H1 (cell line): ENCODE measurements at regions of chr16 and their contacts with region 1.

Region 1: DNA sequence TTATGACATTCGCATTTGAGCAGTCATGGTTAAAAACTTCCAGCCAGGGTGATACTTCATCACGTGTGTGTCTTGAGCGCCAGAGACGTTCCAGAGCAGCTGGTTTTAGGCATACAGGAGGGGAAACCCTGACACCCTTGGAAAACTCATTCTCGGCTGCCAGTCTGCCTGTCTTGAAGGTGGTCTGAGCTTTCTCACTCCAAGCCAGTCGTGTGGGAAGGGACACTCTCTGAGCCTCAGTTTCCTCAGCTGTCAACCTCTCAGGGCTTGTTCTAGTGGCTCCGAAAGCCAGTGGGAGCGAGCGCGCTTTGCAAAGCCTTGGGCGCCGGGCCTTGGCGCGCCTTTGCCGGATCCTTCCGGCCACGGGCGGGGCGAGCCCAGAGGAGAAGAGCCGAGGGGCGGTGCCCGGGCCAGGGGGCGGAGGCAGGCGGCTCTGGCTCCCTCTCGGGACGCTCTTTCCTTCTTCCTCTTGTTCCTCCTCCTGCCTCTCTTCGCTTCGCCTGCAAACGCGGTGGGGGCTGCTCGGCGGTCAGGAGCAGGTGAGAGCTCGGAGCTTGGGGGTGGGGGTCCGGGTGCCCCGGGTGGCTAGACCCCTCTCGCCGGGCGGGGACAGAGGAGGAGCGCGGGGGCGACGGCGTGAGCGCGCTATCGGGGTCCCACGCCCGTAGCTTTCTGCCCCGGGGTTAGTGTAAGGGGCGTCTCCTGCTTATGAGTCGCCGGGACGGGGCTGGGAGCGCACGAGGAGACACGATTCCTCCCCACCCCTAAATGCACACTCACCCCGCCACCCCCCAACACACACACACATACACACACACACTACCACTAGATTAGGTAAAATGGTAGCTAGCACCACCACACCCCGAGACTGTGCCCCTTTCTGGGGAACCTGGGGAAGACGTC is at the start of gene LDAF1:
- DNase-seq: peak in 1 of 2 experiments; percentile 93
- H3K4me3 ChIP-seq: peak within 1 kb of the TSS; percentile 57 to 86 (median 74)
- H3K27ac ChIP-seq: peak within 1 kb of the TSS; percentile 25; the same call in 1 of the 2 replicates
- H3K4me1 ChIP-seq: peaks cover 0 to 10% (median 5%) of the 10 kb centered on the region in 4 experiments; a peak in 4 of 7 replicates
- H3K27me3 ChIP-seq: peaks cover 0 to 7% (median 1%) of the 10 kb centered on the region in 4 experiments; a peak in 3 of 7 replicates
- CTCF ChIP-seq: no peak
- EP300 ChIP-seq: no peak
- POLR2A ChIP-seq: peak in 1 of 2 experiments; percentile 49; a peak in 2 of 3 replicates
- RAD21 ChIP-seq: peak in 1 of 2 experiments; percentile 4; a peak in 1 of 4 replicates
- total RNA-seq, gene LDAF1: 29.1 and 32.4 TPM in 2 replicates

Region 2: GRCh38 chr16:21179126-21179982 is 20.9 kb after region 1 on chr16:
- CTCF ChIA-PET with region 1: interaction called, 11 read pairs
- POLR2A ChIA-PET with region 1: interaction called, 4 read pairs
- DNase-seq: no peak
- H3K4me3 ChIP-seq: no peak overlapping the region
- H3K27ac ChIP-seq: no peak overlapping the region
- H3K4me1 ChIP-seq: no peaks in the 10 kb centered on the region
- H3K27me3 ChIP-seq: no peaks in the 10 kb centered on the region
- CTCF ChIP-seq: no peak
- EP300 ChIP-seq: no peak
- POLR2A ChIP-seq: no peak
- RAD21 ChIP-seq: no peak

Region 3: GRCh38 chr16:21184834-21185233 is 26.4 kb after region 1 on chr16:
- CTCF ChIA-PET with region 1: interaction called, 20 read pairs
- POLR2A ChIA-PET with region 1: interaction called, 4 read pairs
- DNase-seq: no peak
- H3K4me3 ChIP-seq: no peak overlapping the region
- H3K27ac ChIP-seq: no peak overlapping the region
- H3K4me1 ChIP-seq: no peaks in the 10 kb centered on the region
- H3K27me3 ChIP-seq: peaks cover 0 to 2% (median 0%) of the 10 kb centered on the region in 4 experiments; a peak in 2 of 7 replicates
- CTCF ChIP-seq: no peak
- EP300 ChIP-seq: no peak
- POLR2A ChIP-seq: no peak
- RAD21 ChIP-seq: no peak